Activated B cell treated with CpG ODN at 0.5 μM for 24 hours (primary cell): ENCODE measurements at regions of chr17 and their contacts with region 1.

Region 1: GRCh38 chr17:57255776-57256681 is at the start of gene MSI2:
- DNase-seq: peak; percentile 86
- ATAC-seq: peak; percentile 79
- H3K4me3 Mint-ChIP-seq: peak within 1 kb of the TSS; percentile 94
- H3K27ac Mint-ChIP-seq: peak within 1 kb of the TSS; percentile 88
- H3K4me1 Mint-ChIP-seq: peaks cover 44% of the 10 kb centered on the region
- H3K27me3 Mint-ChIP-seq: no peaks in the 10 kb centered on the region
- CTCF ChIP-seq: no peak
- total RNA-seq, gene MSI2: 93.2 and 102 TPM in 2 replicates

Region 2: GRCh38 chr17:56833809-56834379 is 422.1 kb before region 1 on chr17 and contains the starts of genes C17orf67 and DGKE:
- CTCF ChIA-PET with region 1: no interaction called
- POLR2A ChIA-PET with region 1: no interaction called
- intact Hi-C with region 1: loop called (anchors 10 kb)
- DNase-seq: peak; percentile 99
- ATAC-seq: peak; percentile 92
- H3K4me3 Mint-ChIP-seq: peak within 1 kb of the TSS; percentile 93
- H3K27ac Mint-ChIP-seq: peak within 1 kb of the TSS; percentile 88
- H3K4me1 Mint-ChIP-seq: peaks cover 42% of the 10 kb centered on the region
- H3K27me3 Mint-ChIP-seq: no peaks in the 10 kb centered on the region
- CTCF ChIP-seq: no peak
- total RNA-seq, gene C17orf67: 3.3 and 4.0 TPM in 2 replicates
- total RNA-seq, gene DGKE: 15.4 and 20.3 TPM in 2 replicates

Region 3: DNA sequence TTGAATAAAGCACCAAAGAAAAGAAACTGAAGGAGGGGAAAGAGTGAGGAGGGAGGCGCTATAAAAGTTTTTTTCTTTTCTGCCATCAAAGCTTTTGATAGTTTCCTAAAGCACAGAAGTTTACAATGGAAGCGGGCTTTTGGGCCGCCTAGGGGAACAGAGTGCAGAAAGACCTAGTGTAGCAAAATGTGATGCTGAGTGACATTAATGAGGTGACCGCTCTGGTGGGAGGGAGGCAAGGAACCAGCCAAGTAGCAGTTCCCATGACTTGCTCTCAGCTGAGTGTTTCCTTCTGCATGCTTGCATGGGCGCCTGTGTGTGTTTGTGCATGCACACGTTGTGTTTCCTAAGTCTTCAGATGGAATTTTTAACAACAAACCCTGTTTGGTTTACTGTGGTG is 15.8 kb after region 1 on chr17:
- CTCF ChIA-PET with region 1: no interaction called
- POLR2A ChIA-PET with region 1: interaction called, 12 read pairs
- intact Hi-C with region 1: no loop called
- DNase-seq: no peak
- ATAC-seq: no peak
- H3K4me3 Mint-ChIP-seq: no peak overlapping the region
- H3K27ac Mint-ChIP-seq: no peak overlapping the region
- H3K4me1 Mint-ChIP-seq: peaks cover 5% of the 10 kb centered on the region
- H3K27me3 Mint-ChIP-seq: no peaks in the 10 kb centered on the region
- CTCF ChIP-seq: no peak

Region 4: GRCh38 chr17:57408071-57408811 is 152.2 kb after region 1 on chr17:
- CTCF ChIA-PET with region 1: no interaction called
- POLR2A ChIA-PET with region 1: no interaction called
- intact Hi-C with region 1: loop called (anchors 5 kb)
- DNase-seq: no peak
- ATAC-seq: peak; percentile 81
- H3K4me3 Mint-ChIP-seq: peak overlapping the region; percentile 55
- H3K27ac Mint-ChIP-seq: peak overlapping the region; percentile 74
- H3K4me1 Mint-ChIP-seq: peaks cover 25% of the 10 kb centered on the region
- H3K27me3 Mint-ChIP-seq: no peaks in the 10 kb centered on the region
- CTCF ChIP-seq: no peak

Region 5: GRCh38 chr17:57604771-57605674 is 349.0 kb after region 1 on chr17:
- CTCF ChIA-PET with region 1: interaction called, 4 read pairs
- POLR2A ChIA-PET with region 1: interaction called, 3 read pairs
- intact Hi-C with region 1: loop called (anchors 2 kb)
- DNase-seq: peak; percentile 48
- ATAC-seq: peak; percentile 76
- H3K4me3 Mint-ChIP-seq: peak overlapping the region; percentile 72
- H3K27ac Mint-ChIP-seq: peak overlapping the region; percentile 86
- H3K4me1 Mint-ChIP-seq: peaks cover 56% of the 10 kb centered on the region
- H3K27me3 Mint-ChIP-seq: no peaks in the 10 kb centered on the region
- CTCF ChIP-seq: no peak

Region 6: DNA sequence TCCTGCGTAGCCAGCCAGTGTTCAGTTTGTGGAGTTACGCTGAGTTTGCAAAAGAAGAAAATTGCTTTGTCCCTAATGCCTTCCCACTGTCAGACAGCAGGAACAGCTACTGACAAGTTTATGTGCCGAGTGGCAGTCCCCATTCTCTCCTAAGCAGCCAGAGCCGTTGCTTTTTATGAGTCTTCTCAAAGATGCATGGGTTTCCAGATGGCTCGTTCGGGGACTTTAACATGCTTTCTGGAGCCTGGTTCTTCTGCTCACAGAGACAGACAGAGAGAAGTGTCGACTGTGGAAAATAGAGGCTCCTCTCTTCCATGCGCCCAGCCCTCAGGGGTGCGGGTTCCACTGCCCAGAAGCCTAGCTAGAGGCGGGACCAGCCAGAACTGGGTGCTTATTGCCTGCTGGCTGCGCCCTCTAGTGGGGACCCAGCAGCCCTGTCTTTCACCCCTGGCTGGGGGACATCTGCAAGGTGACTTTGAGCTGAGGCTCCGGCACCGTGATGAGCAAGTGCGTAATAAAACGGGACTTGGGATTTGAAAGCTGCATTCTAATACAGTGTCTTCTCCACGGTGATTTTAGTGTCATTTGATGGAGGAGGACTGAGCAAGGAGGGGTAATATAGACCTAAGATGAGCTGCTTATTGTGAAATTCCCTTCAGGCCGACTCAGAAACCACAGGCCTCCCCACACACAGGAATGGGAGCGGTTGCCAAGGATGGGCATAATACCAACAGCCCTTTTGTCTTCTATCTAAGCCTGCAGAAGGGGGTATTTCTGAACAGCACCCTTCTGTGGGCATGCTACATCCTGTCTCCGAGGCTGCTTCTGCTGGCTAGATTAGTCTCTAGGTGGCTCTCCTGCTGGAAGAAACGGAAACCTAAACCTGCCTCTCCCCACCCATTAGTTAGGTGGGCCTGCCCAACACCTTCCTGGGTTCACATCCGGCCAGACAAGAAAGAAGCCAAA is 415.9 kb after region 1 on chr17:
- CTCF ChIA-PET with region 1: interaction called, 4 read pairs
- POLR2A ChIA-PET with region 1: interaction called, 4 read pairs
- intact Hi-C with region 1: loop called (anchors 5 kb)
- DNase-seq: peak; percentile 56
- ATAC-seq: peak; percentile 91
- H3K4me3 Mint-ChIP-seq: no peak overlapping the region
- H3K27ac Mint-ChIP-seq: no peak overlapping the region
- H3K4me1 Mint-ChIP-seq: peaks cover 8% of the 10 kb centered on the region
- H3K27me3 Mint-ChIP-seq: no peaks in the 10 kb centered on the region
- CTCF ChIP-seq: peak; percentile 88

Region 7: GRCh38 chr17:57892146-57892828 is 636.3 kb after region 1 on chr17:
- CTCF ChIA-PET with region 1: no interaction called
- POLR2A ChIA-PET with region 1: no interaction called
- intact Hi-C with region 1: no loop called
- DNase-seq: peak; percentile 77
- ATAC-seq: peak; percentile 98
- H3K4me3 Mint-ChIP-seq: no peak overlapping the region
- H3K27ac Mint-ChIP-seq: no peak overlapping the region
- H3K4me1 Mint-ChIP-seq: no peaks in the 10 kb centered on the region
- H3K27me3 Mint-ChIP-seq: peaks cover 36% of the 10 kb centered on the region
- CTCF ChIP-seq: peak; percentile 62

Region 8: DNA sequence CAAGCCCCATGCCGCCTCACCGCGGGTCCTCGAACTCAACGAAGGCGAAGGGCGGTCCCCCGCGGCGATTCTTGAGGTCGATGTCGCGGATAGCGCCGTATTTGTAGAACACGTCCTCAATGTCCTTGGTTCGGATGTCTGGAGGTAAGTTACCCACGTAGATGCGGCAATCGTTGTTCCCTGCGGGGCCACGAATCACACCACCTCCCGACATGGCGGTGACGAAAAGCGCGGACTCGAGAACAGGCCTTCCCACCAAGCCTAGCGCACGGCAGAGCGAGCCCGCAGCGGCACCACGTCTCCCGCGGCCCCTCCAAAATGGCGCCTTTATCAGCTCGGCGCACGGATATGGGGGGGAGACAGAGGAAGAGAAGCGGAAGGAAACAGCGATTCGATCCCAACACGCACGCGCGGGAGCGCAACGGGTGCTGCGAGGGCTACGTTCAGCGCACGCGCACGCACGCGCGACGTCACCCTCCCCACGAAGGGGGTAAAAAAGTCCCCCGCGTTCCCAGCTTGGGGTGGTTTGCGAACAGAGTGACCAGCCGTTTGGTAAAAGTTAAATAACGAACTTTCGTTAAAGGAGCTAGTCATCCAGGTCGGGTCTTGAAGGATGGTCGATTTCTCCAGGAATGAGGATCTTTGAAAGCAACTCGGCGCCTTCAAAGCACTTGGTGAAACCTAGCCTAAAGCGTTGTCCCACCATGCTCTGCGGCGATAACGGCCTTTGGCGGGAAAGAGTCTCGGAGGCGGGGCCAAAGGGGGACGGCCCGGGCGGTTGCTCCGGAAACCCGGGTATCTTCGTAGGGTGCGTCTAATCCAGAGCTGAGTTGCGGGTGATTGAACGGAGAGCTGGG is 751.1 kb after region 1 on chr17 and contains the start of gene SRSF1:
- CTCF ChIA-PET with region 1: no interaction called
- POLR2A ChIA-PET with region 1: no interaction called
- intact Hi-C with region 1: loop called (anchors 2 kb)
- DNase-seq: peak; percentile 95
- ATAC-seq: peak; percentile 89
- H3K4me3 Mint-ChIP-seq: peak within 1 kb of the TSS; percentile 100
- H3K27ac Mint-ChIP-seq: peak within 1 kb of the TSS; percentile 99
- H3K4me1 Mint-ChIP-seq: peaks cover 53% of the 10 kb centered on the region
- H3K27me3 Mint-ChIP-seq: peaks cover 3% of the 10 kb centered on the region
- CTCF ChIP-seq: no peak
- total RNA-seq, gene SRSF1: 288 and 289 TPM in 2 replicates